Endothelial cell of umbilical vein (primary cell): ENCODE measurements at regions of chr2 and their contacts with region 1.

Region 1: GRCh38 chr2:96116879-96117697 is 717 bp upstream of the ADRA2B start:
- DNase-seq: peak; percentile 17
- H3K4me3 ChIP-seq: peak overlapping the region in 1 of 3 experiments; percentile 12
- H3K27ac ChIP-seq: no peak overlapping the region
- H3K4me1 ChIP-seq: no peaks in the 10 kb centered on the region
- H3K27me3 ChIP-seq: peaks cover 7 to 9% of the 10 kb centered on the region in 2 experiments
- CTCF ChIP-seq: peak; percentile 65 to 93
- POLR2A ChIP-seq: no peak

Region 2: GRCh38 chr2:96024336-96025193 is 92.5 kb before region 1 on chr2:
- CTCF ChIA-PET with region 1: interaction called, 44 read pairs
- POLR2A ChIA-PET with region 1: no interaction called
- dilution Hi-C with region 1: no loop called
- intact Hi-C with region 1: no loop called
- DNase-seq: no peak
- H3K4me3 ChIP-seq: no peak overlapping the region
- H3K27ac ChIP-seq: no peak overlapping the region
- H3K4me1 ChIP-seq: no peaks in the 10 kb centered on the region
- H3K27me3 ChIP-seq: no peaks in the 10 kb centered on the region
- CTCF ChIP-seq: no peak
- POLR2A ChIP-seq: no peak

Region 3: GRCh38 chr2:96074156-96074555 is 42.9 kb before region 1 on chr2:
- CTCF ChIA-PET with region 1: interaction called, 10 read pairs
- POLR2A ChIA-PET with region 1: no interaction called
- dilution Hi-C with region 1: no loop called
- intact Hi-C with region 1: no loop called
- DNase-seq: no peak
- H3K4me3 ChIP-seq: no peak overlapping the region
- H3K27ac ChIP-seq: no peak overlapping the region
- H3K4me1 ChIP-seq: no peaks in the 10 kb centered on the region
- H3K27me3 ChIP-seq: peaks cover 4 to 12% of the 10 kb centered on the region in 2 experiments
- CTCF ChIP-seq: no peak
- POLR2A ChIP-seq: no peak